OCI-LY7 (cell line): ENCODE measurements at regions of chr18 and their contacts with region 1.

Region 1: GRCh38 chr18:5167831-5168230 is 29.2 kb downstream of the AKAIN1 start:
- DNase-seq: peak; percentile 47
- H3K4me3 ChIP-seq: no peak overlapping the region
- H3K27ac ChIP-seq: peak overlapping the region; percentile 24
- H3K4me1 ChIP-seq: peaks cover 14% of the 10 kb centered on the region
- CTCF ChIP-seq: no peak

Region 2: GRCh38 chr18:5155218-5155906 is 12.5 kb before region 1 on chr18:
- CTCF ChIA-PET with region 1: no interaction called
- POLR2A ChIA-PET with region 1: interaction called, 11 read pairs
- intact Hi-C with region 1: no loop called
- DNase-seq: no peak
- H3K4me3 ChIP-seq: no peak overlapping the region
- H3K27ac ChIP-seq: no peak overlapping the region
- H3K4me1 ChIP-seq: peaks cover 19% of the 10 kb centered on the region
- CTCF ChIP-seq: no peak

Region 3: DNA sequence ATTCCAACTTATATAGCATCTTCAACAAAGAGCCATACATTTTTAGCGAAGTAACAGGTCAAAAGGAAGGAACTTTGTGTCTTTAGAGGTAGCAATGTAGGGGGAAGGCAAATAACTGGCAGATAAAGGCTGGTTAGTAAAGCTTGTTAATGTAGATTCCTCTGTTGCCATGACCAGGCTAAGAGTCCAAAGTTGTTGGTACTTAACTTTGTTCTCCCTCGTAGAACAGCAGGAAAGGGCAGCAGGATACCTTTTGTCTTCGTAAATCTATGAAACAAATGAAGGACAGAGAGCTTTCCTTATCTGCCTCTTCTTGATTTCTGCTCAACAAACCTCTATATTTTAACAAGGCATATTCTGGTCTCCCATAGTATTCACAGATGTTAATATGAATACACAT is 109.1 kb after region 1 on chr18:
- CTCF ChIA-PET with region 1: no interaction called
- POLR2A ChIA-PET with region 1: no interaction called
- intact Hi-C with region 1: no loop called
- DNase-seq: no peak
- H3K4me3 ChIP-seq: no peak overlapping the region
- H3K27ac ChIP-seq: no peak overlapping the region
- H3K4me1 ChIP-seq: no peaks in the 10 kb centered on the region
- CTCF ChIP-seq: no peak

Region 4: DNA sequence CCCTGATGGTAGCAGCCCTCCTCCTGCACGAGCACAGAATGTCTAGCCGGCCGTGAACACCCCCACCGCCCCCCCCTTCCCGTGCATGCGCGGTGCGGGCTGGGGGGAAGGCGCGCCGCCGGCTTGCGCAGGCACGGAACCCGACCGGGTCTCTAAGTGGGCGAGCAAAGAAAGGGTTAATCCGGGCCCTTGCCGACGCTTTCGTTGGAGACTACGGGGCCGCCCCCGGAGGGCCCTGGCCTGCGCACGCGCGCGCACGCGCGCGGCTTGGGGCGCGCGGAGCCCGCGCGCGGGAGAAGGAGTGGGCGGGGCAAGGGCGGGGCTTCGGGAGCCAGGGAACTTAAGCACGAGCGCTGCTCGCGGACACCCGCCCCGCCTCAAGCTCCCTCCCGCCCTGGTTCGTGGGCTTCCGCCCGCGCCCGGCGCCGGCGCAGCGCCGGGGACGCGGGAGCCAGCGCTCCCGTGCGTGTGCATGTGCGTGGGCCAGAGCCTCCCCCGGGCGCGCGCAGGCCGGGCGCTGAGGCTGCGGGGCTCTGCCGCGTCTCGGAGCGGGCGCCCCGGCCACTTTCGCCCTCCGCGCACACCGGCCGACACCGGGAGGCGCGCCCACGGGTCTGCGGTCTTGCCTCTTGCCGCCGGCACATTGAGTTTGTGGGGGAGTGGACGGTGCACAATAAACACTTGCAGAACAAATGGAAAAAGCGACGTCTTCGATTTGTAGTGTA is 128.3 kb after region 1 on chr18:
- CTCF ChIA-PET with region 1: no interaction called
- POLR2A ChIA-PET with region 1: interaction called, 3 read pairs
- intact Hi-C with region 1: loop called (anchors 5 kb)
- DNase-seq: peak; percentile 97
- H3K4me3 ChIP-seq: peak overlapping the region; percentile 86
- H3K27ac ChIP-seq: peak overlapping the region; percentile 92
- H3K4me1 ChIP-seq: peaks cover 43% of the 10 kb centered on the region
- CTCF ChIP-seq: no peak